CD8-positive, alpha-beta T cell (primary cell): ENCODE measurements at regions of chr6 and their contacts with region 1.

Region 1: GRCh38 chr6:122422614-122423267 is 23.3 kb downstream of the HSF2 start:
- DNase-seq: no peak
- ATAC-seq: no peak
- H3K4me3 ChIP-seq: no peak overlapping the region
- H3K4me3 Mint-ChIP-seq: no peak overlapping the region
- H3K27ac ChIP-seq: no peak overlapping the region
- H3K27ac Mint-ChIP-seq: no peak overlapping the region
- H3K4me1 ChIP-seq: no peaks in the 10 kb centered on the region
- H3K4me1 Mint-ChIP-seq: no peaks in the 10 kb centered on the region
- H3K27me3 ChIP-seq: no peaks in the 10 kb centered on the region
- H3K27me3 Mint-ChIP-seq: no peaks in the 10 kb centered on the region
- CTCF ChIP-seq: no peak

Region 2: GRCh38 chr6:122438975-122439374 is 16.2 kb after region 1 on chr6:
- CTCF ChIA-PET with region 1: no interaction called
- POLR2A ChIA-PET with region 1: no interaction called
- intact Hi-C with region 1: loop called in 1 of 2 experiments (anchors 2 kb)
- DNase-seq: no peak
- ATAC-seq: no peak
- H3K4me3 ChIP-seq: no peak overlapping the region
- H3K4me3 Mint-ChIP-seq: no peak overlapping the region
- H3K27ac ChIP-seq: no peak overlapping the region
- H3K27ac Mint-ChIP-seq: no peak overlapping the region
- H3K4me1 ChIP-seq: no peaks in the 10 kb centered on the region
- H3K4me1 Mint-ChIP-seq: peaks cover 15% of the 10 kb centered on the region
- H3K27me3 ChIP-seq: no peaks in the 10 kb centered on the region
- H3K27me3 Mint-ChIP-seq: no peaks in the 10 kb centered on the region
- CTCF ChIP-seq: no peak

Region 3: DNA sequence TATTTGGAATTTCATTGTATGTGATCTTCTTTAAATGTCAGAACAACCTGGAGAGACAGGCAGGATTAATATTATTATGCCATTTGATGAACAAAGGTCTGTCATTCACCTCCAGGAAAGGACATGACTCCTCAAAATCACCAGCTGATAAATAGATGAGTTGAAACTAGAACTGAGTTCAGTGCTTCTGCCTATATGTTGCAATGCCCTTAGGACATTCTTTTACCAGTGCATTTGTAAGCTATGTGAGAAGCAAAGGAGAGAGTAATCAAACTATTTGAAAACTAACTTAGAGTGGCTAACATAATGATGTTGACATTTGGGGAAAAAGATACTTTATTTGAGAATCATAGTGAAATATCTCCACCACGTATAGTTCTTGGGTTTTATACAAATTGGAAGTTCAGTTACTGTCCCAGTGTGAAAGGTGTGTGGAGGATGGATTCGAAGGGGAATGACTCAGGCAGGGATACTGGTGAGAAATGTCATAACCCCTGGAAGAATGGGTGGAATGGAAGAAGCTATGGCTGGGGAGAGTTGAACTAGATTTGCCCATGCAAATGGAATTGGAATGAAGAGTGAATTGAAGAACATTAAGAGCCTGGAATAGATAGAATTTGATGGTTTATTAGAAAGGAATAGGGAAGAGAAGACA is 209.0 kb after region 1 on chr6:
- CTCF ChIA-PET with region 1: no interaction called
- POLR2A ChIA-PET with region 1: no interaction called
- intact Hi-C with region 1: no loop called
- DNase-seq: no peak
- ATAC-seq: no peak
- H3K4me3 ChIP-seq: no peak overlapping the region
- H3K4me3 Mint-ChIP-seq: no peak overlapping the region
- H3K27ac ChIP-seq: no peak overlapping the region
- H3K27ac Mint-ChIP-seq: no peak overlapping the region
- H3K4me1 ChIP-seq: no peaks in the 10 kb centered on the region
- H3K4me1 Mint-ChIP-seq: no peaks in the 10 kb centered on the region
- H3K27me3 ChIP-seq: no peaks in the 10 kb centered on the region
- H3K27me3 Mint-ChIP-seq: peaks cover 6% of the 10 kb centered on the region
- CTCF ChIP-seq: no peak